ENCODE measurements at regions of chr15 and their contacts with region 1.

Region 1: DNA sequence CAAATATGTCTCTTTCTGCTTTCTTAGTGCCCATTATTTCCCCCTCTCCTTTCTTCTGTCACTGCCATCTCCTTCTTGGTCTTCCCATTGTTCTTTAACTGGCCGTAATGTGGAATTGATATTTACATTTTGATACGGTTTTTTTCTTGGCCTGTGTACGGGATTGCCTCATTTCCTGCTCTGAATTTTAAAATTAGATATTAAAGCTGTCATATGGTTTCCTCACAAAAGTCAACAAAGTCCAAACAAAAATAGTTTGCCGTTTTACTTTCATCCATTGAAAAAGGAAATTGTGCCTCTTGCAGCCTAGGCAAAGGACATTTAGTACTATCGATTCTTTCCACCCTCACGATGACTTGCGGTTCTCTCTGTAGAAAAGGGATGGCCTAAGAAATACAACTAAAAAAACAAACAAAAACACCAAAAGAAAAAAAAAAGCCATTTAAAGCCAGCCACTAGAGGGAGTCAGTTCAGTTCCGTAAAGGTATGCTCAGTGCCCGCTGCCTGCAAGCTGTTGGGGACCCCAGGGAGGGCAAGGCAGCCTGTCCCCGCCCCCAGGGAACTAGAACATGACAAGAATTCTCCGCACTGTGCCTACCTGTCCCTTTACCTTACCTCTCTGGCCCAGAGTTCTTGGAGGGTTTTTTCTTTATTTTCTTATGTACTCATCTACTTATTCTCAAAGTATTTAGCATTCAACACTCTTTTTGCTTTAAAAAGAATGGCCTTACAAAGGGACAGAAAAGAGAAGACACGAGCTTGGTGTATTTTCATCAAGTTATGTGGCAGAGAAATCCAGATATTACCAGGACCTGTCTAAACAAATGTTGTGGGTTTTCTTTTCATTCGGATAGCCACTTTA is 30.0 kb upstream of the NR2E3 start:
- DNase-seq: peak in 1 of 2 experiments; percentile 31
- H3K4me3 ChIP-seq: no peak overlapping the region
- H3K27ac ChIP-seq: no peak overlapping the region
- H3K4me1 ChIP-seq: no peaks in the 10 kb centered on the region; a peak in 3 of 7 replicates
- H3K27me3 ChIP-seq: no peaks in the 10 kb centered on the region
- CTCF ChIP-seq: peak; percentile 50 to 76 (median 68)
- EP300 ChIP-seq: no peak
- POLR2A ChIP-seq: no peak
- RAD21 ChIP-seq: peak; percentile 51 to 67

Region 2: GRCh38 chr15:71654720-71655174 is 125.6 kb before region 1 on chr15:
- CTCF ChIA-PET with region 1: no interaction called
- POLR2A ChIA-PET with region 1: no interaction called
- DNase-seq: no peak
- H3K4me3 ChIP-seq: no peak overlapping the region
- H3K27ac ChIP-seq: no peak overlapping the region
- H3K4me1 ChIP-seq: peaks cover 0 to 7% (median 1%) of the 10 kb centered on the region in 4 experiments; a peak in 2 of 7 replicates
- H3K27me3 ChIP-seq: no peaks in the 10 kb centered on the region
- CTCF ChIP-seq: no peak
- EP300 ChIP-seq: no peak
- POLR2A ChIP-seq: no peak
- RAD21 ChIP-seq: no peak

Region 3: DNA sequence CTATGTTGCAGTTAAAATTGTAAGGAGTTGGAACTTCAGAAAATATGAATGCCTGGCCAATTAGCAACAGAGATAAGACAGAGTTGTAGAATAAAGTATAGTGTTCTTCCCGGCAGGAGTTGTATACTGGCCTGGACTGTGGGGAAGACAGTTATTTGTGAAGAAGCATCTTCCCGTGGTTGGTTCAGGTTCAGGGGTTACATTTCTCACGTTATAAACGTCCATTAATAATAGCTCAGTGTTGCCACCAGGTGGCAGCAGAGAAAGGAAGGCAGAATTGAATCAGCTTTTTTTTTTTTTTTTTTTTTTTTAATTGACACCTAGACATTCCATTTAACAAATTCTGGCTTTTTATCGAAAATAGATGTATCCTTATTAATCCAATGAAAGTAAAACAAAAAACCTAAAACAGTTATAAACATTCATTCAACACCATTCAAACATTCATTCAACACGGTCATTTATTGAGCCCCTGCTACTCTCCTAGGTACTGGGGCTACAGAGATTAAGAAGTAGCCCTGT is 36.4 kb before region 1 on chr15:
- CTCF ChIA-PET with region 1: interaction called, 13 read pairs
- POLR2A ChIA-PET with region 1: no interaction called
- DNase-seq: peak in 1 of 2 experiments; percentile 60
- H3K4me3 ChIP-seq: no peak overlapping the region
- H3K27ac ChIP-seq: no peak overlapping the region
- H3K4me1 ChIP-seq: no peaks in the 10 kb centered on the region
- H3K27me3 ChIP-seq: no peaks in the 10 kb centered on the region
- CTCF ChIP-seq: peak in 2 of 3 experiments; percentile 60 to 62; a peak in 3 of 4 replicates
- EP300 ChIP-seq: no peak
- POLR2A ChIP-seq: no peak
- RAD21 ChIP-seq: peak; percentile 48 to 61

Region 4: DNA sequence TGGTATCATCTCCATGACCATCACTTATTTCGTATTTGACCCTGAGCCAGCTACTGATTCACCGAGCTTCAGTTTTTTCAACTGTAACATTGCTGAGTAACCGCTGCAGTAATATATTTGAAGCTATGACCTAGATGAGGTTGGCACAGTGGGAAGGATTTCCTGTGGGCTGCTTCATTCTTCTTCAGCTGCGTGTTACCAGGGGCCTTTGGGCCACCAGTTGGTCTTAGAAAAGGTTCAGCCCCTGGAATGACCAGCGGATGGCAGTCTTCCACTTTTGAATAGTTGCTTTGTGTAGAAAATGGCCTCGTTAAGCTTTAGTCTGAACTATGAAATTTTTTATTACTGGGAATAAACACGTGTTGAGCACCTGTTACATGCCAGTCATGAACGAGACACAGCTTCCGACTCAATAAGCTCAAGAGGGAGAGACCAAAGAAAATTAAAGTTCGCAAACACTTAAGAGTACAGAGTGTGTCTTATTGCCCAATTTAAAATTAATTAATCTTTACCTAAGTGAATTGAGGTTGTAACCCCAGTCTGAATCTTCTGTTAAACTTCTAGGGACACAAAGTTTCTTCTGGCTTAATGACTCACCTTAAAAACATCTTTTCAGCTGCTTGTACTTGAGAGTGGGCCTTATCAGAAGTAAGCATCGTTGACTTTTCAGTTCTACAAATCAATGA is 27.6 kb before region 1 on chr15:
- CTCF ChIA-PET with region 1: interaction called, 49 read pairs
- POLR2A ChIA-PET with region 1: interaction called, 7 read pairs
- DNase-seq: no peak
- H3K4me3 ChIP-seq: no peak overlapping the region
- H3K27ac ChIP-seq: no peak overlapping the region
- H3K4me1 ChIP-seq: no peaks in the 10 kb centered on the region
- H3K27me3 ChIP-seq: no peaks in the 10 kb centered on the region
- CTCF ChIP-seq: peak; percentile 28 to 66 (median 57)
- EP300 ChIP-seq: no peak
- POLR2A ChIP-seq: no peak
- RAD21 ChIP-seq: peak; percentile 64 to 72

Region 5: GRCh38 chr15:71761649-71762369 is 18.5 kb before region 1 on chr15:
- CTCF ChIA-PET with region 1: interaction called, 10 read pairs
- POLR2A ChIA-PET with region 1: no interaction called
- DNase-seq: no peak
- H3K4me3 ChIP-seq: no peak overlapping the region
- H3K27ac ChIP-seq: no peak overlapping the region
- H3K4me1 ChIP-seq: no peaks in the 10 kb centered on the region
- H3K27me3 ChIP-seq: no peaks in the 10 kb centered on the region
- CTCF ChIP-seq: no peak
- EP300 ChIP-seq: no peak
- POLR2A ChIP-seq: no peak
- RAD21 ChIP-seq: no peak

Region 6: DNA sequence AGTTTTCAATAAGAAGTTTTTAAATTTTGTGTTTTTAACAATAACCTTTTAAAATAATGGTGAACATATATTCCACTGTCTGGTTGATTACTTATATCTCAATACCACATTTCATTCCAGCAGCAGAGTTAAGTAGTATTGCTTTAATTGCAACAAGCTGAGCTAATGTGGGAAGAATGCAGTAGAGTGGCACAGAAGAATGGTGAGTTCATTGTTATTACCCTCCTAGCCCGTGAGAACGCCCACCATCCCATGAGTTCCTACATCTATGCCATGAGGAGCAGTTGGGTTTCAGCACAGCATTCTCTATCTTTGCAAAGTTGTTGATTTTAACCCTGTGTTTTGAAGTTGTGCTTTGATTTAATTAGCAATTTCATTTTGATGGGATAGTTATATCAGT is 12.2 kb after region 1 on chr15:
- CTCF ChIA-PET with region 1: interaction called, 22 read pairs
- POLR2A ChIA-PET with region 1: interaction called, 3 read pairs
- DNase-seq: no peak
- H3K4me3 ChIP-seq: no peak overlapping the region
- H3K27ac ChIP-seq: no peak overlapping the region
- H3K4me1 ChIP-seq: no peaks in the 10 kb centered on the region
- H3K27me3 ChIP-seq: no peaks in the 10 kb centered on the region
- CTCF ChIP-seq: no peak
- EP300 ChIP-seq: no peak
- POLR2A ChIP-seq: no peak
- RAD21 ChIP-seq: no peak

Region 7: GRCh38 chr15:71971905-71972304 is 191.6 kb after region 1 on chr15:
- CTCF ChIA-PET with region 1: no interaction called
- POLR2A ChIA-PET with region 1: no interaction called
- DNase-seq: no peak
- H3K4me3 ChIP-seq: no peak overlapping the region
- H3K27ac ChIP-seq: no peak overlapping the region
- H3K4me1 ChIP-seq: no peaks in the 10 kb centered on the region
- H3K27me3 ChIP-seq: no peaks in the 10 kb centered on the region
- CTCF ChIP-seq: no peak
- EP300 ChIP-seq: no peak
- POLR2A ChIP-seq: no peak
- RAD21 ChIP-seq: no peak

Measured in H1 (cell line).